Left ventricle myocardium inferior (tissue), 1 donor: ENCODE measurements at regions of chr20 and their contacts with region 1.

Region 1: DNA sequence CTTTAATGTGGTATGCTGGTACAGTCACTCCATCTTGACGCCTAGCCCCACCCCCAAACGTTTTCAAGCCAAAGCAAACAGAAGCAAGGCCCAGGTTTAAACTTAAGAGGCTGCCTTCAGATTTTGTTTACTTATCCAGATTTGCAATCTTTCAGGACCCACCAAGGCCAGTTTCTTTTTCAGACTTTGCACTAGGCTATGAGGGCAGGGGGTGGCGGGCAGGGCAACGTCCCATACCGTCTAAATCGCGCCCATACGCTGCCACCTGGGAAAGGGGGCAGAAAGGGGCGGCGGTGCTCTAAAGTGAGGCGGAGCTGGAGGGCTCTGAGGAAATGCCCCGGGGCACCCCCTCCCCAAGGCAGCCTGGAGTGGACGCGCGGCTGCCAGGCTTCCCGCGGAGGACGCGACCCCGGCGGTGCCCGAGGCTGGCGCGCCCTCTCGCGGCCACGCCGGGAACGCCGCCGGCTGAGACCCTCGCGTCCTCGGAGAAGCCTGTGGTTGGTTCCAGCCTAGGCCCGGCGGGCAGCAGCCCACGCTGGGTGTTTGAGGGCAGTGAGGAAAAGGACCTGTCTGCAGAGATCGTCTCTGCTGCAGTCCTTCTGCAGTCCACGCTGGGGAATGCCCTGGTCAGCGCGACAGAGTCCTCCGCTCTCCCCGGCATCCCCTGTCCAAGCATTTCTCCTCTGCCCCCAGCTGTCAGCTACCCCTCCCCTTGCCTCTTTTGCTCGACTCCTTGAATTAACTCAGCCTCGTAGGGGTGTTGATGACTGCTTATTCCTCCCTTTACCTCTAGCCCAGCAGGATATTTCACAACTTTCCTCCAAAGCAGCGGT is 129.2 kb upstream of the PRND start:
- DNase-seq: peak; percentile 41
- H3K4me3 ChIP-seq: peak overlapping the region; percentile 57
- H3K27ac ChIP-seq: no peak overlapping the region
- H3K4me1 ChIP-seq: peaks cover 8% of the 10 kb centered on the region
- H3K27me3 ChIP-seq: peaks cover 25% of the 10 kb centered on the region
- CTCF ChIP-seq: peak; percentile 95

Region 2: GRCh38 chr20:4256874-4257273 is 335.7 kb before region 1 on chr20:
- intact Hi-C with region 1: loop called (anchors 10 kb)
- DNase-seq: no peak
- H3K4me3 ChIP-seq: no peak overlapping the region
- H3K27ac ChIP-seq: no peak overlapping the region
- H3K4me1 ChIP-seq: peaks cover 4% of the 10 kb centered on the region
- H3K27me3 ChIP-seq: peaks cover 25% of the 10 kb centered on the region
- CTCF ChIP-seq: no peak

Region 3: GRCh38 chr20:4645646-4646045 is 53.1 kb after region 1 on chr20:
- intact Hi-C with region 1: no loop called
- DNase-seq: no peak
- H3K4me3 ChIP-seq: no peak overlapping the region
- H3K27ac ChIP-seq: no peak overlapping the region
- H3K4me1 ChIP-seq: no peaks in the 10 kb centered on the region
- H3K27me3 ChIP-seq: no peaks in the 10 kb centered on the region
- CTCF ChIP-seq: no peak